PC-3 (cell line): ENCODE measurements at regions of chr5 and their contacts with region 1.

Region 1: GRCh38 chr5:60323596-60323995 is 376.4 kb downstream of the DEPDC1B start:
- DNase-seq: no peak
- ATAC-seq: no peak
- H3K4me3 ChIP-seq: no peak overlapping the region
- H3K27ac ChIP-seq: no peak overlapping the region
- H3K4me1 ChIP-seq: no peaks in the 10 kb centered on the region
- H3K27me3 ChIP-seq: no peaks in the 10 kb centered on the region; the same call in 1 of the 2 replicates
- CTCF ChIP-seq: no peak

Region 2: GRCh38 chr5:60092671-60093422 is 230.7 kb before region 1 on chr5:
- CTCF ChIA-PET with region 1: no interaction called
- POLR2A ChIA-PET with region 1: no interaction called
- intact Hi-C with region 1: no loop called
- DNase-seq: peak; percentile 93
- ATAC-seq: peak; percentile 99
- H3K4me3 ChIP-seq: no peak overlapping the region
- H3K27ac ChIP-seq: peak overlapping the region; percentile 20; the same call in 1 of the 2 replicates
- H3K4me1 ChIP-seq: peaks cover 11% of the 10 kb centered on the region
- H3K27me3 ChIP-seq: no peaks in the 10 kb centered on the region
- CTCF ChIP-seq: no peak

Region 3: DNA sequence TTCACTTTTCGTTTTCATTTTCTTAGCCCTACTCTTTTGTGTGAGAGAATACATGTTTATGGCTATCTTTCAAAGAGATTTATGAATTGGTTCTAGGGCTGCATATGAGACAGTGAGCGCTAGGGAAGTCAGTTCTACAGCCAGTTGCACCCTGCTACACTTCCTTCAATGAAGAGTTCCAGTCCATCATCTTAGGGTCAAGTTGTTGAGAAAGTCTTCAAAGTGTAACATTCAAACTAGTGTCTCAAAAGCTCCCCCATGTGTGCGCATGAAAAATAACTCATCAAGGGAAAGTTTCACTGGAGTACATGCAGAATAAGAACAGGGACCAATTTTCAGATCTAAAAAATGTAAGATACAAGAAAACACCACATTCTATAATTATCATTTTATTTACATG is 59.1 kb after region 1 on chr5:
- CTCF ChIA-PET with region 1: no interaction called
- POLR2A ChIA-PET with region 1: no interaction called
- intact Hi-C with region 1: loop called (anchors 10 kb)
- DNase-seq: peak; percentile 34
- ATAC-seq: no peak; the same call in 1 of the 2 replicates
- H3K4me3 ChIP-seq: no peak overlapping the region
- H3K27ac ChIP-seq: no peak overlapping the region
- H3K4me1 ChIP-seq: no peaks in the 10 kb centered on the region
- H3K27me3 ChIP-seq: peaks cover 17% of the 10 kb centered on the region
- CTCF ChIP-seq: peak; percentile 61

Region 4: DNA sequence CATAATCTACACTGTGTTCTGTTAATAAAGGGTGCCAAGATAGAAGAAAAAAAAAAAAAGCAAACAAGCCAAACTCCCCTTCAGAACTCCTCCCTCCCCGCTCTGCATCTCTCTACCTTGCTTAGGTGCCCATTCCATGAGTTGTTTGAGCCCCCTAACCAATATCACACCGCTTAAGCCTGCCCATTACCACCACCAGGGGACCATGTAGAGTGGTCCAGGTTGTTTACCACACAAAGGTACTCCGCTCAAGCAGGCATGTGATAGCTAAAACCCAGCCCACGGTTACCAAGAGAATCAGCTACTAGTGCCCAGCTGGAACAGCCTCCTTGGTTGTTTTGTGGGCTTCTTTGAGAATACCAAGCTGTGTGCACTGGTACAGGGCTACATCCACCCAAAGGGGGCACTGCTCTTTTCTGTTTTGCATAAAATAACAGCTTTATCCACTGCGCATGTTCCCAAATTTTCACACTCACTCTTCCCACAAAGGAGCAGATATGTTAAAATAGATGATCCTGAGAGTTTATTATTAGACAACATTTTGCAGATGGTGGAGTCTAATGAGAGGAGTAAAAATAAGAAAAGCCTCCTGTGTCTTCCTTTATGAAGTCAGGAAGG is 72.2 kb after region 1 on chr5:
- CTCF ChIA-PET with region 1: no interaction called
- POLR2A ChIA-PET with region 1: no interaction called
- intact Hi-C with region 1: no loop called
- DNase-seq: no peak
- ATAC-seq: no peak
- H3K4me3 ChIP-seq: no peak overlapping the region
- H3K27ac ChIP-seq: no peak overlapping the region
- H3K4me1 ChIP-seq: no peaks in the 10 kb centered on the region
- H3K27me3 ChIP-seq: peaks cover 39% of the 10 kb centered on the region
- CTCF ChIP-seq: peak; percentile 23; the same call in 1 of the 2 replicates